Right cardiac atrium (tissue), 5 donors: ENCODE measurements at regions of chr5 and their contacts with region 1.

Region 1: DNA sequence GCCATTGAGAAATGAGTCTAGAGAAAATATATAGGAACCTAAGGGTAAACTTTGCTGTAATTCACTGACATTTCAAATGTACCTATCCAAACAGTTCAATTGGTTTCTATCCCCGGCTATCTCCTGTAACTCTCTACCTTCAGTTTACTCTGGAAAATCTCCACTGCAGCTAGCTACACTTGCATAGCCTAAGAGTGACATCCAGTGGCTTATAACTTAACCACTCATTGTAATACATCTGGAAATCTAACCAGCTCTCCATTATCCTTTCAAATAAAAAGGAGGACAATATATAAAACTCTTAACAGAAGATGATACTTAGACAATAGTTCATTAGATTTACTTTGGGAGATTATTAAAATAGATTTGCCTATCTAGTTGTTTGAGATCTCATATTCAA is 35.3 kb upstream of the SPDL1 start:
- DNase-seq: no peak
- ATAC-seq: peak; percentile 88 to 92
- H3K4me3 ChIP-seq: no peak overlapping the region
- H3K27ac ChIP-seq: no peak overlapping the region
- H3K4me1 ChIP-seq: no peaks in the 10 kb centered on the region
- H3K27me3 ChIP-seq: no peaks in the 10 kb centered on the region

Region 2: DNA sequence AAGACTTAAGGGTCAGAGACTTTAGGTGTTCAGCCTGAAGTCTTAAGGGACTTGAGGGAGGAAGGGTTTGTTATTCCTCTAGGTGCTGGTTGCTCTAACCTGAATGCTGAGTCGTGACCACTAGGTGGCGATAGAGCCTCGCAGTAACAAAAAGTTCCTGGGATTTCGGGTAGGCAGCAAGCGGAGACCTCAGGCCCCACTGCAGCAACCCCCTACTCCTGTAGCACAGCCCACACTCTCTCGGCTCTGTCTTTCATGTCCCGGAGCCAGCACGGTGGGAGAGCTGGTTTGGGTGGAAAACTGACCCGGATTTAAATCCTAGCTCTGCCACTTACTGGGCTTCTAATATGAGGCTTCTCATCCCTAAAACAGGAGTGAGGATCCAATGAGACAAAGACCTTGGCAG is 868.8 kb before region 1 on chr5:
- intact Hi-C with region 1: loop called in 1 of 4 experiments (anchors 10 kb)
- DNase-seq: peak; percentile 77 to 86 (median 80)
- ATAC-seq: peak; percentile 39 to 55
- H3K4me3 ChIP-seq: no peak overlapping the region
- H3K27ac ChIP-seq: no peak overlapping the region
- H3K4me1 ChIP-seq: peaks cover 12% of the 10 kb centered on the region
- H3K27me3 ChIP-seq: no peaks in the 10 kb centered on the region

Region 3: DNA sequence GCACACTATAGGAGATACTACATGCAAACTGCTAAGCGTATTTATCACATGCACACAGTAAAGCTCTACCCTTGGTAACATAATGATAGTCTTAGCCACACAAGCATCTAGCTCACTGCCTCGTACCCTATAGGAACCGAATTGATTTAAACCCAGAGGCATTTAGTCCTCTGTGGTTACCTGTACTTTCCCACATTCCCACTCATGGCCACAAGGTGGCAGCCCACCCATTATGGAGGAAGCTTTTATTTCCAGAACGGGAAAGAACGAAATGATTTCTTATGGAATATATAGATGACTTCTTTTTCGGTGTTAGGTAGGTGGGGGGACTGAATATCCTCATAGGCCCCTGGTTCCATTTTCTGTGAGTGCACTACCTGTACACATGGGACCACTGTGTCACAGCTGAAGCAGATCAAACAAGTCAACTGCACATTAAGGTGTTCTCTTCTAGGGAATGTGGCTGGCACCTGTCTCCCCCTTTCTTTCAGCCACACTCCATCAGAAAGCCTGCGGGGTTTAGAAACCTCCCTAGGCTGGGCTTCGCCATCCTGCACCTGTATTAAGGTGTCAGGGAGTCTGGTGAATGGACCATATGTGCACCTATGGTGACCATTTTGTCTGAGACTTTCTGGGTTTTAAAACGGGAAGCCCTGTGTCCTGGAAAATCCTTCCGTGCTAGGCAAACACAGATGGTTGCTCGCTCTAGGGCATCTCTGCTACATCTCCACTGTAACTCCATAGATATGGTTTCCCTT is 560.6 kb before region 1 on chr5:
- intact Hi-C with region 1: loop called in 3 of 4 experiments (anchors 5 to 10 kb)
- DNase-seq: peak; percentile 70 to 90 (median 78)
- ATAC-seq: peak; percentile 29 to 53
- H3K4me3 ChIP-seq: no peak overlapping the region
- H3K27ac ChIP-seq: no peak overlapping the region
- H3K4me1 ChIP-seq: no peaks in the 10 kb centered on the region
- H3K27me3 ChIP-seq: no peaks in the 10 kb centered on the region

Region 4: GRCh38 chr5:169339869-169340268 is 208.4 kb before region 1 on chr5:
- intact Hi-C with region 1: loop called in 1 of 4 experiments (anchors 10 kb)
- DNase-seq: no peak
- ATAC-seq: no peak
- H3K4me3 ChIP-seq: no peak overlapping the region
- H3K27ac ChIP-seq: no peak overlapping the region
- H3K4me1 ChIP-seq: peaks cover 3% of the 10 kb centered on the region
- H3K27me3 ChIP-seq: no peaks in the 10 kb centered on the region